ENCODE measurements at regions of chr1 and their contacts with region 1.

Region 1: DNA sequence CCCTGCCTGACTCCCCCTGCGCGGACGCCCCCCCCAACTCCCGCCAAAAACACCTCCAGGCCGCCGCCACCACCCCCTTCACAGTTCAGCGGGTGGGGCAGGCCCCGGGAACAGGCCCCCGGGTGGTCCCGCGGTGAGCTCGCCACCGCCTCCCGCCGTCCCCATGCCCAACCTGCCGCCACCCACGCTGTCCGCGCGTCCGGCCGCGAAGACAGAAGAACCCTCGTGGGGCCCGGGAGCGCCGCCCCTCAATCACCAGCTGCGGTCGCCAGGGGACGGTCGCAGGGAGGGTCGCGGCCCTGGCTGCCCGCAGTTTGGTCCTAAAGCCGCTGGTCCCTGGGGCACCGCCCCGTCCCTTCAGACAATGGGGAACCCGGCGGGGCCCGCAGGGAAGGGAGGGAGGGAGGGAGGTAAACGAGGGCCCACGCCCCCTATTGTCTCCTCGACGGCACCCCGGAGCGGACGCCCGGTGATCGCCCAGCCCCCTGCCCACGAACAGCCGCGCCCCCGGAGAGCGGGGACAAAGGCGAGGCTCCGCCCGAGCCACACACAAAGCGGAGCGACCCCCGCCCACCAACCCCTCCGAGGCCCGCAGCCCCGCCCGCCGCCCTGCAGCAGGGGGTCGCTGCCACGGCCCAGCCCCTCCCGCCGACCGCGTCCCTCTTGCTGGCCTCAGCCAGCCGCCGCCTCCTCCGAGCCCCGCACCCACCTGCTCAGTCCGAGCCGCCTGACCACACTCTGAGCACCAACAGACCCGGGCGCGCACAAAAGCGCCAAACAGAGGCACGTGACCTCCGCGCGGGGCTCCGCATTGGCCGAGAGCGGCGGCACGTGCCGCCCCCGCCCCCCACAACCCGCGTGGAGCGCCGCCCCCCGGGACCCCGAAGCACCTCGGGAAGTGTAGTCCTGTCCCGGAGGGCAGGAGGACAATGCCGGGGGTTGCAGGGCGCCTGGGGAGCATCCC is at the start of gene STMN1:
- DNase-seq: peak; percentile 95
- H3K4me3 Mint-ChIP-seq: peak within 1 kb of the TSS; percentile 84
- H3K27ac Mint-ChIP-seq: peak within 1 kb of the TSS; percentile 89
- H3K4me1 Mint-ChIP-seq: peaks cover 23% of the 10 kb centered on the region
- H3K27me3 Mint-ChIP-seq: no peaks in the 10 kb centered on the region
- total RNA-seq, gene STMN1: 619 to 630 TPM

Region 2: DNA sequence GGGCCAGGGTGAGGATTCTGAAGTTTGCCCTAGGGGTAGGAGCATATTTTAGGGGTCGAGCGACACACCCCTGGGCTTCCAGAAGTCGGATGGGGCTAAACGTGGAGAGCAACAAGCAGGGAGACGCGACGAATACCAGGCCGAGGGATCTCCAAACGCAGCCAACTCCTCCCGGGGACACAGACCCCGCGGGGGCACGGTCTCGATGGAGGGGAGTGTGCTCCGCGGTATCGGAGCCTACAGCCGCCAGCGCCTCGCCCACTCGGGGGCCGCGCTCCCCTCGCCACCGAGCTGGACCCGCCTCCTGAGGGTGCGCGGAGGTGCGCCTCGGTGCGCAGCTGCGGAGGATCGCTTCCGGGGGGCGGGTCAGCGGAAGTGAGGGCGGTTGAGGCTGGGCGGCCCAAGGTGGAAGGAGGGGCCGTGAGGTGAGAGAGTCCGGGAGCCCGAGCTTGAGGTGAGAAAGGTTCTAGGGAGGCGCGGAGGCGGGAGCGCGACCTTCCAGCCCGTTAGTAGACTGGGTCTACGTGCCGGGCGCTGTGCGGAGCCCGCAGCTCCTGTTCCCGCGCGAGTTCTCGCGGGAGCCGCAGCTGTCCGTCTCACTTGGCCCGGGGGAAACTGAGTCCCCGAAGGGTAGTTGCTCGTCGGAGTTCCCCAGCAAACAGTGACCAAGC is 86.3 kb before region 1 on chr1 and contains the start of gene MTFR1L:
- CTCF ChIA-PET with region 1: no interaction called
- POLR2A ChIA-PET with region 1: interaction called, 8 read pairs
- intact Hi-C with region 1: loop called (anchors 5 kb)
- DNase-seq: peak; percentile 97
- H3K4me3 Mint-ChIP-seq: peak within 1 kb of the TSS; percentile 95
- H3K27ac Mint-ChIP-seq: peak within 1 kb of the TSS; percentile 89
- H3K4me1 Mint-ChIP-seq: peaks cover 33% of the 10 kb centered on the region
- H3K27me3 Mint-ChIP-seq: no peaks in the 10 kb centered on the region
- total RNA-seq, gene MTFR1L: 28.0 to 31.1 TPM

Region 3: GRCh38 chr1:25858906-25859789 is 46.8 kb before region 1 on chr1 and contains the start of gene AUNIP:
- CTCF ChIA-PET with region 1: no interaction called
- POLR2A ChIA-PET with region 1: no interaction called
- intact Hi-C with region 1: loop called (anchors 1 kb)
- DNase-seq: peak; percentile 93
- H3K4me3 Mint-ChIP-seq: peak within 1 kb of the TSS; percentile 86
- H3K27ac Mint-ChIP-seq: peak within 1 kb of the TSS; percentile 86
- H3K4me1 Mint-ChIP-seq: peaks cover 15% of the 10 kb centered on the region
- H3K27me3 Mint-ChIP-seq: no peaks in the 10 kb centered on the region
- total RNA-seq, gene AUNIP: 7.8 to 10.1 TPM

Region 4: GRCh38 chr1:25922056-25922969 is 16.4 kb after region 1 on chr1:
- CTCF ChIA-PET with region 1: interaction called, 8 read pairs
- POLR2A ChIA-PET with region 1: interaction called, 3 read pairs
- intact Hi-C with region 1: loop called (anchors 2 kb)
- DNase-seq: peak; percentile 66
- H3K4me3 Mint-ChIP-seq: peak overlapping the region; percentile 70
- H3K27ac Mint-ChIP-seq: no peak overlapping the region
- H3K4me1 Mint-ChIP-seq: peaks cover 27% of the 10 kb centered on the region
- H3K27me3 Mint-ChIP-seq: peaks cover 1% of the 10 kb centered on the region